ENCODE measurements at regions of chr3 and their contacts with region 1.

Region 1: GRCh38 chr3:56801662-56802377 is at the start of gene ARHGEF3:
- DNase-seq: peak; percentile 90
- ATAC-seq: peak; percentile 72
- H3K4me3 Mint-ChIP-seq: peak within 1 kb of the TSS; percentile 92
- H3K27ac Mint-ChIP-seq: peak within 1 kb of the TSS; percentile 91
- H3K4me1 Mint-ChIP-seq: peaks cover 26% of the 10 kb centered on the region
- H3K27me3 Mint-ChIP-seq: no peaks in the 10 kb centered on the region
- total RNA-seq, gene ARHGEF3: 130 TPM

Region 2: DNA sequence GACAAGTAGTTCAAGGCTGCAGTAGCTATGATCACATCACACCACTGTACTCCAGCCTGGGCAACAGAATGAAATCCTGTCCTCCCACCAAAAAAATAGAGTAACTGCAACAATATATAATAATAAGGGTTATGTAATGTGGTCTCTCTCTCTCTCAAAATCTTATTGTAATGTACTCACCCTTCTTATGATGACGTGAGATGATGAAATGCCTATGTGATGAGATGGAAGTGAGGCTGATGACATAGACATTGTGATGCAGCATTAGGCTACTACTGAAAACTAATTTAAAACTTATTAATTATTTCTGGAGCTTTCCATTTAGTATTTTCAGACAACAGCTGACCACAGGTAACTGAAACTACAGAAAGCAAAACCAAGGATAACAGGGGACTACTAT is 146.1 kb before region 1 on chr3:
- POLR2A ChIA-PET with region 1: no interaction called
- DNase-seq: no peak
- ATAC-seq: no peak
- H3K4me3 Mint-ChIP-seq: no peak overlapping the region
- H3K27ac Mint-ChIP-seq: no peak overlapping the region
- H3K4me1 Mint-ChIP-seq: peaks cover 20% of the 10 kb centered on the region
- H3K27me3 Mint-ChIP-seq: no peaks in the 10 kb centered on the region

Region 3: DNA sequence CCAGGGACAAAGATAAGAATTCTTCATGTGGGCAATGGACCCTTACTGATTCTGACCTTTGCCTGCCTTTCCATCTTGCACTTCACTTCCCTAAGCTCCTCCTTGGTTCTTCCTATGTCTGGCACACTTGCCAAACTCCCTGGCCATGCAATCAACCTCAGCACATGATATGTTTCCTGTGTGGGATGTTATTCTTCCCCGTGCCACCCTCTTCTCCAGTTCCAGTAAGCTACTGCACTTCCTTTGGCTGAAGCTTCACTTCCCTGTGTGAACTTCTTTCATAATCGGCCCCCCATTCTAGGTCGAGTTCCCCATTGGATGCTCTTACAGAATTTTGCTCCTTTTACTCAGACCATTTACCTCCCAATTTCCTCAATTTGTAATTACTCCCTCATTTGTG is 108.1 kb before region 1 on chr3:
- POLR2A ChIA-PET with region 1: interaction called, 17 read pairs
- DNase-seq: no peak
- ATAC-seq: no peak
- H3K4me3 Mint-ChIP-seq: peak overlapping the region; percentile 89
- H3K27ac Mint-ChIP-seq: peak overlapping the region; percentile 90
- H3K4me1 Mint-ChIP-seq: peaks cover 32% of the 10 kb centered on the region
- H3K27me3 Mint-ChIP-seq: no peaks in the 10 kb centered on the region

Region 4: DNA sequence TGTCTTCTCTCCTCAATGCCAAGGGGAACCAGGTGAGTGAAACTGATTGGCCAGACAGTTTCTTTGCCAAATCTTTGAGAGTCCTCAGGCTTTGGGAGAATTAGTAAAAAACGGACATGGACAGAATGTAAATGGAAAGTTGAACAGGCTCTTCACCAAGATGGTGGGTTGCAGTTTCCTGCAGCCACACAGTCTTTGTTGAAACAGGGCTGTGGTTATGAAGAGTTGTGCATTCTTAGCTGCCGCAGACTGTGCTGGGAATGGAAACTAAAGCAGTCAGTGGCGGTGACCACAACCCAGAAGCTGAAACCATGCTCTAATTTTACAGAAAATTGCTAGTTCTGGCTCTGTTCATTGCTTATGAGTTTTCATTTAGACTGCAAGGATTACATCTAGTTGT is 76.6 kb before region 1 on chr3:
- POLR2A ChIA-PET with region 1: interaction called, 45 read pairs
- DNase-seq: peak; percentile 63
- ATAC-seq: peak; percentile 90
- H3K4me3 Mint-ChIP-seq: peak overlapping the region; percentile 75
- H3K27ac Mint-ChIP-seq: peak overlapping the region; percentile 95
- H3K4me1 Mint-ChIP-seq: peaks cover 63% of the 10 kb centered on the region
- H3K27me3 Mint-ChIP-seq: no peaks in the 10 kb centered on the region

Region 5: DNA sequence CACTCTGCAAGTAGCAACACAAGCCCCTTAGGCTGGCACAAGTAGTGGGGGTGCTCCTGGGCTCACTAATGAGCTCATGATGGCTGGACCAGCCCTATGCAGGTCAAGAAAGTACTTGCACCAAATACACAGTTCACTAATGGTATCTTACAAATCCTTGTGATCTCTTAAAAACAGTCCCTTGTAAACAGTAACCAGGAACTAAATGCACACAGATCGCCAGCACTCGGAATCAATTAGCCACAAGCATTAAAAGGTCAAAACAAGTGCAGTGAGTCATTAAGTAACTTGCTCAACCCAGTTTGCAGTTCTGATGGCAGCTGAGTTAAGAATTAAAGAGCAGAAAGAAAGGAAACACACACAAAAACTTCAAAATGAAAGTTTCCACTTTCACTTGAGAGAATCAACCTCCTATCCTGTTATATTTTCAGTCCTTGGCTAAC is 43.3 kb before region 1 on chr3:
- POLR2A ChIA-PET with region 1: interaction called, 132 read pairs
- DNase-seq: no peak
- ATAC-seq: peak; percentile 73
- H3K4me3 Mint-ChIP-seq: peak overlapping the region; percentile 71
- H3K27ac Mint-ChIP-seq: peak overlapping the region; percentile 93
- H3K4me1 Mint-ChIP-seq: peaks cover 76% of the 10 kb centered on the region
- H3K27me3 Mint-ChIP-seq: no peaks in the 10 kb centered on the region

Region 6: GRCh38 chr3:56812754-56813650 is 11.2 kb after region 1 on chr3:
- POLR2A ChIA-PET with region 1: interaction called, 20 read pairs
- DNase-seq: no peak
- ATAC-seq: no peak
- H3K4me3 Mint-ChIP-seq: peak overlapping the region; percentile 43
- H3K27ac Mint-ChIP-seq: peak overlapping the region; percentile 65
- H3K4me1 Mint-ChIP-seq: peaks cover 23% of the 10 kb centered on the region
- H3K27me3 Mint-ChIP-seq: no peaks in the 10 kb centered on the region

Region 7: GRCh38 chr3:56869157-56869889 is 67.5 kb after region 1 on chr3:
- POLR2A ChIA-PET with region 1: no interaction called
- DNase-seq: no peak
- ATAC-seq: no peak
- H3K4me3 Mint-ChIP-seq: peak overlapping the region; percentile 59
- H3K27ac Mint-ChIP-seq: peak overlapping the region; percentile 27
- H3K4me1 Mint-ChIP-seq: peaks cover 27% of the 10 kb centered on the region
- H3K27me3 Mint-ChIP-seq: no peaks in the 10 kb centered on the region

Region 8: GRCh38 chr3:56894881-56895431 is 93.1 kb after region 1 on chr3:
- POLR2A ChIA-PET with region 1: no interaction called
- DNase-seq: no peak
- ATAC-seq: peak; percentile 64
- H3K4me3 Mint-ChIP-seq: no peak overlapping the region
- H3K27ac Mint-ChIP-seq: no peak overlapping the region
- H3K4me1 Mint-ChIP-seq: peaks cover 47% of the 10 kb centered on the region
- H3K27me3 Mint-ChIP-seq: no peaks in the 10 kb centered on the region

Region 9: GRCh38 chr3:56921573-56922453 is 120.0 kb after region 1 on chr3:
- POLR2A ChIA-PET with region 1: interaction called, 85 read pairs
- DNase-seq: peak; percentile 45
- ATAC-seq: peak; percentile 43
- H3K4me3 Mint-ChIP-seq: peak overlapping the region; percentile 84
- H3K27ac Mint-ChIP-seq: peak overlapping the region; percentile 93
- H3K4me1 Mint-ChIP-seq: peaks cover 70% of the 10 kb centered on the region
- H3K27me3 Mint-ChIP-seq: no peaks in the 10 kb centered on the region